Activated B cell treated with CpG ODN at 0.5 μM for 24 hours (primary cell): ENCODE measurements at regions of chr1 and their contacts with region 1.

Region 1: GRCh38 chr1:220294846-220295301 is 22.6 kb upstream of the RAB3GAP2 start:
- DNase-seq: no peak
- ATAC-seq: no peak
- H3K4me3 Mint-ChIP-seq: no peak overlapping the region
- H3K27ac Mint-ChIP-seq: no peak overlapping the region
- H3K4me1 Mint-ChIP-seq: no peaks in the 10 kb centered on the region
- H3K27me3 Mint-ChIP-seq: peaks cover 13% of the 10 kb centered on the region
- CTCF ChIP-seq: no peak

Region 2: DNA sequence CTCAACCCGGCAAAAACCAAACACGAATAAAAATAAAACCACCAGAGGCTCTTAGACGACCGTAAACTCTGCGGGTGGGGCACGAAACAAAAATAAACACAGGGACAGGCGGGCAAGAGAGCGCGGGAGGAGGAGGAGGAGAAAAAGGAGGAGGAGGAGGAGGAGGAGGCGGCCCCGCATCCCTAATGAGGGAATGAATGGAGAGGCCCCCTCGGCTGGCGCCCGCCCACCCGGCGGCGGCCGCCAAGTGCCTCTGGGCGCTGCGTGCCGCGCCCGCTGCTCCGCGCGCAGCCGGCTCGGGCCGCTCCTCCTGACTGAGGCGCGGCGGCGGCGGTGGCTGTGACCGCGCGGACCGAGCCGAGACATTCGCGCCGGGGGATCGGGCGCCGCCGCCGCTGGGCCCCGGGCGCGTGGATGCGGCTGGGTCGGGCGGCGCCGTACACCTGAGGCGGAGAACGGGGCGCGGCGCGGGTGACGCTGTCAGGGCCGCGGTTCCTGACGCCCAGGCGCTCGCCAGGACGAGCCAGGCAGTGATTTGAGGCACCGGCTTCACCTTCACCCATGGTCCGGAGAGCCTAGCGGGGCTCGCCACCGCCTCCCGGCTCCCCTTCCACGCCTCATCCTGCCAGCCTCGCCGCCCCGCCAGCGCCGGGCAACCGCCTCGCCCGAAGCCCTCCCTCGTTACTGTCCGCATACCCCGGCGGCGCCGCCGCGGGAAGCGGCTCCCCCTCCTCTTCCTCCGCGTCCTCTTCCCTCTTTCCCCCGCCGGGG is 233.2 kb after region 1 on chr1 and contains the start of gene MARK1:
- CTCF ChIA-PET with region 1: no interaction called
- POLR2A ChIA-PET with region 1: no interaction called
- intact Hi-C with region 1: loop called (anchors 2 kb)
- DNase-seq: peak; percentile 42
- ATAC-seq: peak; percentile 64
- H3K4me3 Mint-ChIP-seq: peak within 1 kb of the TSS; percentile 87
- H3K27ac Mint-ChIP-seq: peak within 1 kb of the TSS; percentile 78
- H3K4me1 Mint-ChIP-seq: peaks cover 21% of the 10 kb centered on the region
- H3K27me3 Mint-ChIP-seq: peaks cover 31% of the 10 kb centered on the region
- CTCF ChIP-seq: no peak
- total RNA-seq, gene MARK1: 3.8 and 5.7 TPM in 2 replicates

Region 3: GRCh38 chr1:220803401-220804201 is 508.7 kb after region 1 on chr1:
- CTCF ChIA-PET with region 1: interaction called, 3 read pairs
- POLR2A ChIA-PET with region 1: no interaction called
- intact Hi-C with region 1: loop called (anchors 1 kb)
- DNase-seq: no peak
- ATAC-seq: peak; percentile 40
- H3K4me3 Mint-ChIP-seq: no peak overlapping the region
- H3K27ac Mint-ChIP-seq: no peak overlapping the region
- H3K4me1 Mint-ChIP-seq: no peaks in the 10 kb centered on the region
- H3K27me3 Mint-ChIP-seq: no peaks in the 10 kb centered on the region
- CTCF ChIP-seq: no peak